SK-N-SH (cell line): ENCODE measurements at regions of chr22 and their contacts with region 1.

Region 1: GRCh38 chr22:42437488-42438292 is 5.5 kb upstream of the NFAM1 start:
- DNase-seq: peak; percentile 82
- H3K4me3 ChIP-seq: peak overlapping the region; percentile 46 to 65
- H3K27ac ChIP-seq: no peak overlapping the region
- H3K4me1 ChIP-seq: peaks cover 0 to 23% of the 10 kb centered on the region in 2 experiments; a peak in 2 of 4 replicates
- H3K27me3 ChIP-seq: no peaks in the 10 kb centered on the region
- CTCF ChIP-seq: peak; percentile 74
- EP300 ChIP-seq: no peak
- RAD21 ChIP-seq: peak; percentile 88

Region 2: GRCh38 chr22:42169055-42169469 is 268.6 kb before region 1 on chr22:
- CTCF ChIA-PET with region 1: interaction called, 60 read pairs
- POLR2A ChIA-PET with region 1: no interaction called
- DNase-seq: peak; percentile 84
- H3K4me3 ChIP-seq: peak overlapping the region in 1 of 2 experiments; percentile 56; a peak in 1 of 4 replicates
- H3K27ac ChIP-seq: no peak overlapping the region
- H3K4me1 ChIP-seq: peaks cover 0 to 23% of the 10 kb centered on the region in 2 experiments; a peak in 3 of 4 replicates
- H3K27me3 ChIP-seq: no peaks in the 10 kb centered on the region
- CTCF ChIP-seq: peak; percentile 71
- EP300 ChIP-seq: no peak
- RAD21 ChIP-seq: peak; percentile 92

Region 3: DNA sequence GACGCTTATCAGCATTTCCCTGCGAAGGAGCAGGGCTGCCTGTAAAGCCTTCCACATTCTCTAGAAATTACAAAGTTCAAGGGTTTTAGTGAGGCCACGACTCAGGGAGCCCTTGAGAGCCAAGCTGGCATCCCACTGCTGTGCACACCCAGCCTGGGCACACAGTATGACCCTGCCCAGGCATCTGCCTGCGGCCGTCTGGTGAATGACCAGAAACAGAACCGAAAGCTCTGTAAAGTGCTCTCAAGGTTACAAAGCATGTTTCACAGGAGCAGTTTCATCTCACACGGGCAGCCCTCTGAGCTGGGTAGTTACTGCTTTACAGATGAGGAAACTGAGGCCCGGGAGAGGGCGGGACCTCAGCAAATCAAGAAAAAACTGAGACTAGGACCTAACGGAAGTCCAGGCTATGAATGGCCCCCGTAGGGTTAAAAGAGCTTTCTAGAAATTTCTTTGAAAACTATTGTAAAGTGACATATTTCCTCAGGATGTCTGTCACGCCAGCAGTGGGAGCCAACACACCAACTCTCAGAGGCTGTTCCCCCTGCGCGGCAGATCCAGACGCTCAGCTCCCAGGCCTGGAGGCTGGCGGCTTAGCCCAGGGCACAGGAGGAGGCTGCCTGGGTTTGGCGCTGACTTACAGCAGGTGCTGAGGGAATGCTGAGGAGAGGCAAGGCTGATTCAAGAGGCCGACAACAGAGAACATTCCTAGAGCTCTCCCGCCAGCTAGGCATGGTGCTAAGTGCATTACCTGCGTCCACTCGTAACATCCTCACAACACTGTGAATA is 159.5 kb before region 1 on chr22:
- CTCF ChIA-PET with region 1: interaction called, 14 read pairs
- POLR2A ChIA-PET with region 1: no interaction called
- DNase-seq: peak; percentile 58
- H3K4me3 ChIP-seq: no peak overlapping the region
- H3K27ac ChIP-seq: no peak overlapping the region
- H3K4me1 ChIP-seq: no peaks in the 10 kb centered on the region; a peak in 1 of 4 replicates
- H3K27me3 ChIP-seq: no peaks in the 10 kb centered on the region
- CTCF ChIP-seq: no peak
- EP300 ChIP-seq: no peak
- RAD21 ChIP-seq: peak; percentile 63